Activated CD8-positive, alpha-beta T cell treated with anti-CD3 and anti-CD28 coated beads, Interleukin-2, amount 10 ng/mL, durations not matched to agents 7 days and 5 days (primary cell): ENCODE measurements at regions of chr6 and their contacts with region 1.

Region 1: GRCh38 chr6:109073344-109074132 is 21.1 kb downstream of the SESN1 start:
- DNase-seq: peak; percentile 74
- ATAC-seq: peak; percentile 68
- H3K4me3 Mint-ChIP-seq: no peak overlapping the region
- H3K27ac Mint-ChIP-seq: no peak overlapping the region
- H3K4me1 Mint-ChIP-seq: peaks cover 27% of the 10 kb centered on the region
- H3K27me3 Mint-ChIP-seq: no peaks in the 10 kb centered on the region

Region 2: DNA sequence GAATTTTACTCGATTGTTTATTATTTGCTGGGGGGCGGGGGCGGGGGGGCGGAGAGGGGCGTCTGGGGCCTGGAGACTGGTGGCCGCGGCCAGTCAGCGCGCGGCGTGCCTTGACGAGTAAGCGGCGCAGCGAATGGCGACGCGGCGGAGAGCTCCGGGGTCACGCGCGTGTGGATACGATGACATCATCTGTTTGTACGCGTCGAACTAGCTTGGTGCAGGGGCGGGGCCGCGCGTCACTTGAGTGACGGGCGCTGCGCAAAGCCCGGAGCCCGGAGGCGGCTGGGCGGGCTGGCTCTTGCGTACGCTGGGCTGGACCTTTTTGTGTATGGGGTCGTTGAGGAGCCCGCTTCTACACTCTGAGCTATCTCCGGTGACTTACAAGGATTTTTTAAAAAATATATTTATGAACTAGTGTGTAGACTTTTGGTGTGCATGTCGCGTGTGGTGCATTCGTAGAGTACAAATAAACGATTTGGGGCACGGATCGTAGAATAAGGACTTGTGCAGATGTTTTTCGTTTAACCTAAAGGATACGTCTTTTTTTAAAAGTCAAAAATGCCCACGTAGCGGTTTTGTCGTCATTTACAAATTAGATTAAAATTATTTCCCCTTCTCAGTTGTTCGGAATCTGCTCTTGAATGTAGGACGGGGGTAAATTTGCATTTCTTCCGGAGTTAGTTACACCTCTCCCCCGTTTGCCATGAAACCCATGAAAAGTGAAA is 515.0 kb before region 1 on chr6:
- CTCF ChIA-PET with region 1: interaction called, 11 read pairs
- POLR2A ChIA-PET with region 1: interaction called, 4 read pairs
- DNase-seq: peak; percentile 98
- ATAC-seq: peak; percentile 73
- H3K4me3 Mint-ChIP-seq: peak overlapping the region; percentile 94
- H3K27ac Mint-ChIP-seq: peak overlapping the region; percentile 96
- H3K4me1 Mint-ChIP-seq: peaks cover 29% of the 10 kb centered on the region
- H3K27me3 Mint-ChIP-seq: peaks cover 17% of the 10 kb centered on the region

Region 3: GRCh38 chr6:108904741-108905140 is 168.8 kb before region 1 on chr6:
- CTCF ChIA-PET with region 1: interaction called, 14 read pairs
- POLR2A ChIA-PET with region 1: no interaction called
- DNase-seq: peak; percentile 38
- ATAC-seq: peak; percentile 24
- H3K4me3 Mint-ChIP-seq: no peak overlapping the region
- H3K27ac Mint-ChIP-seq: no peak overlapping the region
- H3K4me1 Mint-ChIP-seq: peaks cover 44% of the 10 kb centered on the region
- H3K27me3 Mint-ChIP-seq: no peaks in the 10 kb centered on the region

Region 4: GRCh38 chr6:108944707-108945680 is 128.5 kb before region 1 on chr6:
- CTCF ChIA-PET with region 1: interaction called, 17 read pairs
- POLR2A ChIA-PET with region 1: no interaction called
- DNase-seq: no peak
- ATAC-seq: no peak
- H3K4me3 Mint-ChIP-seq: no peak overlapping the region
- H3K27ac Mint-ChIP-seq: no peak overlapping the region
- H3K4me1 Mint-ChIP-seq: peaks cover 58% of the 10 kb centered on the region
- H3K27me3 Mint-ChIP-seq: no peaks in the 10 kb centered on the region

Region 5: GRCh38 chr6:109050012-109050411 is 23.5 kb before region 1 on chr6:
- CTCF ChIA-PET with region 1: interaction called, 18 read pairs
- POLR2A ChIA-PET with region 1: interaction called, 6 read pairs
- DNase-seq: no peak
- ATAC-seq: no peak
- H3K4me3 Mint-ChIP-seq: no peak overlapping the region
- H3K27ac Mint-ChIP-seq: no peak overlapping the region
- H3K4me1 Mint-ChIP-seq: peaks cover 19% of the 10 kb centered on the region
- H3K27me3 Mint-ChIP-seq: no peaks in the 10 kb centered on the region

Region 6: GRCh38 chr6:109117346-109118035 is 44.0 kb after region 1 on chr6:
- CTCF ChIA-PET with region 1: no interaction called
- POLR2A ChIA-PET with region 1: no interaction called
- DNase-seq: no peak
- ATAC-seq: no peak
- H3K4me3 Mint-ChIP-seq: no peak overlapping the region
- H3K27ac Mint-ChIP-seq: no peak overlapping the region
- H3K4me1 Mint-ChIP-seq: peaks cover 14% of the 10 kb centered on the region
- H3K27me3 Mint-ChIP-seq: no peaks in the 10 kb centered on the region

Region 7: GRCh38 chr6:109139109-109139508 is 65.6 kb after region 1 on chr6:
- CTCF ChIA-PET with region 1: no interaction called
- POLR2A ChIA-PET with region 1: no interaction called
- DNase-seq: no peak
- ATAC-seq: no peak
- H3K4me3 Mint-ChIP-seq: no peak overlapping the region
- H3K27ac Mint-ChIP-seq: no peak overlapping the region
- H3K4me1 Mint-ChIP-seq: peaks cover 3% of the 10 kb centered on the region
- H3K27me3 Mint-ChIP-seq: no peaks in the 10 kb centered on the region

Region 8: GRCh38 chr6:109382576-109383437 is 309.3 kb after region 1 on chr6:
- CTCF ChIA-PET with region 1: interaction called, 12 read pairs
- POLR2A ChIA-PET with region 1: no interaction called
- DNase-seq: peak; percentile 95
- ATAC-seq: peak; percentile 72
- H3K4me3 Mint-ChIP-seq: peak overlapping the region; percentile 94
- H3K27ac Mint-ChIP-seq: peak overlapping the region; percentile 100
- H3K4me1 Mint-ChIP-seq: peaks cover 30% of the 10 kb centered on the region
- H3K27me3 Mint-ChIP-seq: peaks cover 5% of the 10 kb centered on the region